ENCODE measurements at regions of chr22 and their contacts with region 1.

Region 1: DNA sequence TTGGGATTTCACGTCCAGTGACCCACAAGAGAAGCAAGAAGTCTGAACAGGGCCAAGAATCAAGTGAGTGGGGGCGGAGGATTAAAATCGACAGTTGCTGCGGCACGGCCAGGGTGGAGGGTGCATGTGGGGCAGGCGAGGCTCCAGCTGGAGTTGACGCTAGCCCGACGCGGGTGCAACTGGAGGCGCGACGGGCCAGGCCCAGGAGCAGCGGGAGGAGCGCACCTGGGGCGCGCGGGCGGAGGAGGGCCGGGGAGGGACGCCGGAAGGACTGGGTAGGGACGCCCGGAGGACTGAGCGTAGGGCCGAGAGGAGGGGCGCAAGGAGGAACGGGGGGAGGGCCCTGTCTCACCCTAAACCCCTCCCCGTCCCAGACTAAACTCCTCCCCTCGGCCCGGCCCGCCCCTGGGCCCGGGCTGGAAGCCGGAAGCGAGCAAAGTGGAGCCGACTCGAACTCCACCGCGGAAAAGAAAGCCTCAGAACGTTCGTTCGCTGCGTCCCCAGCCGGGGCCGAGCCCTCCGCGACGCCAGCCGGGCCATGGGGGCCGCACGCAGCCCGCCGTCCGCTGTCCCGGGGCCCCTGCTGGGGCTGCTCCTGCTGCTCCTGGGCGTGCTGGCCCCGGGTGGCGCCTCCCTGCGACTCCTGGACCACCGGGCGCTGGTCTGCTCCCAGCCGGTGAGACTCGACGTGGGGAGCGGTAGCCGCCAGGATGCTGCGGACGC is at the start of gene IL17RA:
- DNase-seq: peak; percentile 94
- H3K4me3 Mint-ChIP-seq: peak within 1 kb of the TSS; percentile 88
- H3K27ac Mint-ChIP-seq: peak within 1 kb of the TSS; percentile 86
- H3K4me1 Mint-ChIP-seq: peaks cover 40% of the 10 kb centered on the region
- H3K27me3 Mint-ChIP-seq: no peaks in the 10 kb centered on the region
- total RNA-seq, gene IL17RA: 16.8 and 17.6 TPM in 2 replicates

Region 2: DNA sequence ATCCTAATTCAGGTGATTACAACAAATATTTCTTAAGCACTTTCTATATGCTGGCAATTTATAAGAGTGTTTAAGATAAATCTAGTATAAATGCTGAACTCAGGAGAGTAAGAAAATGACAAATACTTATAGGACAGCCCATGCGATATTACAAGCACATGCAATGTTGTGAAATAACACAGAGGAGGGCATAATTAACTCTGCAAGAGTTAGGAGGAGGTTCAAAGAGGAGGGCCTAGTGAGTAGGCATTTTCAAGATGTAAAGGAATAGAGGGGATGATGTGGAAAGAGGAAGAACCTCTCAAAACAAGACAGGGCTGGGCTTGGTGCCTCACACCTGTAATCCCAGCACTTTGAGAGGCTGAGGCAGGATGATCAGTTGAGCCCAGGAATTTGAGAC is 37.1 kb before region 1 on chr22:
- intact Hi-C with region 1: no loop called
- DNase-seq: no peak
- H3K4me3 Mint-ChIP-seq: no peak overlapping the region
- H3K27ac Mint-ChIP-seq: no peak overlapping the region
- H3K4me1 Mint-ChIP-seq: no peaks in the 10 kb centered on the region
- H3K27me3 Mint-ChIP-seq: peaks cover 7% of the 10 kb centered on the region

Region 3: DNA sequence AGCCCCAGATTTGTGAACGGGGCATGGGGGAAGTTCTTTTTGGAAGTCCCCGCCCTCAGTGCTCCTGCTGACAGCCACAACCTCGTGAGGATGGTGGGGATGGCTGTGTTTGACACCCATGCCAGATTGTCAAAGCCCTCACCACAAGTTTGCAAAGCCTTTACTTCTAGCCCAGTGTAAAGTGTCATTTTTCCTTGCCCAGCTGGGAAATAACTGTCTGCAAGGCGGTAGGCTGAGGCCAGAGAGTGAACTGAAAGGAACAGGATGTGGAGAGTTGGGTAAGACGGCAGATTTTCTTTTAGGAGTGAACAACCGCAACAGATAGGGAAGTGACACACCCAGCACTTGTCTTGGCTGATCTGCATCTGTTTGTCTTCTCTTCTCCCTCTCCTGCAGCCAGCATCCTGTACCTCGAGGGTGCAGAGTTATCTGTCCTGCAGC is 13.7 kb after region 1 on chr22:
- intact Hi-C with region 1: loop called (anchors 1 kb)
- DNase-seq: peak; percentile 38
- H3K4me3 Mint-ChIP-seq: peak overlapping the region; percentile 58
- H3K27ac Mint-ChIP-seq: peak overlapping the region; percentile 48
- H3K4me1 Mint-ChIP-seq: peaks cover 65% of the 10 kb centered on the region
- H3K27me3 Mint-ChIP-seq: no peaks in the 10 kb centered on the region

Region 4: GRCh38 chr22:17106785-17107546 is 22.3 kb after region 1 on chr22:
- intact Hi-C with region 1: loop called (anchors 2 kb)
- DNase-seq: no peak
- H3K4me3 Mint-ChIP-seq: peak overlapping the region; percentile 51
- H3K27ac Mint-ChIP-seq: peak overlapping the region; percentile 46
- H3K4me1 Mint-ChIP-seq: peaks cover 23% of the 10 kb centered on the region
- H3K27me3 Mint-ChIP-seq: no peaks in the 10 kb centered on the region

Region 5: GRCh38 chr22:17143826-17144225 is 59.1 kb after region 1 on chr22:
- intact Hi-C with region 1: no loop called
- DNase-seq: no peak
- H3K4me3 Mint-ChIP-seq: no peak overlapping the region
- H3K27ac Mint-ChIP-seq: no peak overlapping the region
- H3K4me1 Mint-ChIP-seq: no peaks in the 10 kb centered on the region
- H3K27me3 Mint-ChIP-seq: no peaks in the 10 kb centered on the region

Region 6: GRCh38 chr22:17158568-17159503 is 74.1 kb after region 1 on chr22 and contains the start of gene HDHD5:
- intact Hi-C with region 1: loop called (anchors 2 kb)
- DNase-seq: peak; percentile 75
- H3K4me3 Mint-ChIP-seq: peak within 1 kb of the TSS; percentile 83
- H3K27ac Mint-ChIP-seq: peak within 1 kb of the TSS; percentile 58
- H3K4me1 Mint-ChIP-seq: peaks cover 21% of the 10 kb centered on the region
- H3K27me3 Mint-ChIP-seq: no peaks in the 10 kb centered on the region
- total RNA-seq, gene HDHD5: 44.3 and 44.8 TPM in 2 replicates